Activated CD4-positive, alpha-beta memory T cell treated with anti-CD3 and anti-CD28 coated beads for 36 hours (primary cell): ENCODE measurements at regions of chr19 and their contacts with region 1.

Region 1: DNA sequence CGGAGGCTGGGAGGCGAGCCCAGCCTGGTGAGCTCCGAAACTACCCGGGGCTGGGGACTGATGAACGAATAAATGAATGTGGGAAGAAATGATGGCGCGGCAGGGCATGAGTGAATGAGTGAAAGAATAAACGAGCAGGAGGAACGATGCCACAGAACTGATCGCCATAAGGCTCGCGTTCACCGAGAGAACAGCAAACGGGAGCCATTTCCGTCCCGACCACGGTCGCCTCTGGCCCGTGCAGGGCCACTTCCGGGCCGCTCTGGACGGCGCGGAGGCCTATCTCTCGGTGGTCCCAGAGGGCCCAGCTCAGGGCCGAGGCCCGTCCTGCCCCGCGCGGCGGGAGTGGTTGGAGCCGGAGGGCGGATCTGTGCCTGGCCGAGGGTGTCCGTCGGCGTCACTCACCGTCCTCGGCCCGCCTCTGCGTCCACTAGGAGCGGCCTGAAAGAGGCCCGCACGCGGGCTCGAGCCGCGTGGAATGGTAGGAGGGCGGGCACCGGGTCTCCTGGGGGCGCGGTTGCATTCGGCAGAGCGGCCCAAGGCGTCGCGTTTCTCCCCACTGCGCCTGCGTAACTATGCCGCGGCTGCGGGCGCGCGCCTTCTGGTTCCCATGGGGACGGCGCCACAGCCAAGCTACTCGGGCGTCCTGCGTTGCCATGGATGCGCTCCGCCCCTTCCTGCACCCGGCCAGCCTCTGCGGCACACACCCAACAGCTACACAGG is at the start of gene ZNF497:
- DNase-seq: peak; percentile 98
- H3K4me3 Mint-ChIP-seq: peak within 1 kb of the TSS; percentile 94
- H3K27ac Mint-ChIP-seq: peak within 1 kb of the TSS; percentile 89
- H3K4me1 Mint-ChIP-seq: peaks cover 8% of the 10 kb centered on the region
- H3K27me3 Mint-ChIP-seq: no peaks in the 10 kb centered on the region
- total RNA-seq, gene ZNF497: 0.31 to 0.93 TPM

Region 2: GRCh38 chr19:58284199-58284598 is 78.2 kb before region 1 on chr19:
- CTCF ChIA-PET with region 1: no interaction called
- POLR2A ChIA-PET with region 1: no interaction called
- intact Hi-C with region 1: no loop called
- DNase-seq: no peak
- H3K4me3 Mint-ChIP-seq: no peak overlapping the region
- H3K27ac Mint-ChIP-seq: no peak overlapping the region
- H3K4me1 Mint-ChIP-seq: peaks cover 26% of the 10 kb centered on the region
- H3K27me3 Mint-ChIP-seq: no peaks in the 10 kb centered on the region

Region 3: GRCh38 chr19:58326914-58327726 is 35.3 kb before region 1 on chr19 and contains the start of gene ZSCAN22:
- CTCF ChIA-PET with region 1: no interaction called
- POLR2A ChIA-PET with region 1: interaction called, 8 read pairs
- intact Hi-C with region 1: loop called (anchors 1 kb)
- DNase-seq: peak; percentile 95
- H3K4me3 Mint-ChIP-seq: no peak within 1 kb of the TSS
- H3K27ac Mint-ChIP-seq: no peak within 1 kb of the TSS
- H3K4me1 Mint-ChIP-seq: peaks cover 4% of the 10 kb centered on the region
- H3K27me3 Mint-ChIP-seq: no peaks in the 10 kb centered on the region
- total RNA-seq, gene ZSCAN22: 3.1 to 3.3 TPM

Region 4: GRCh38 chr19:58346961-58347931 is 15.2 kb before region 1 on chr19:
- CTCF ChIA-PET with region 1: no interaction called
- POLR2A ChIA-PET with region 1: interaction called, 12 read pairs
- intact Hi-C with region 1: loop called (anchors 1 kb)
- DNase-seq: peak; percentile 74
- H3K4me3 Mint-ChIP-seq: peak overlapping the region; percentile 92
- H3K27ac Mint-ChIP-seq: peak overlapping the region; percentile 42
- H3K4me1 Mint-ChIP-seq: peaks cover 21% of the 10 kb centered on the region
- H3K27me3 Mint-ChIP-seq: peaks cover 4% of the 10 kb centered on the region

Region 5: GRCh38 chr19:58374200-58374599 is 11.8 kb after region 1 on chr19:
- CTCF ChIA-PET with region 1: no interaction called
- POLR2A ChIA-PET with region 1: no interaction called
- intact Hi-C with region 1: no loop called
- DNase-seq: no peak
- H3K4me3 Mint-ChIP-seq: no peak overlapping the region
- H3K27ac Mint-ChIP-seq: no peak overlapping the region
- H3K4me1 Mint-ChIP-seq: no peaks in the 10 kb centered on the region
- H3K27me3 Mint-ChIP-seq: no peaks in the 10 kb centered on the region